Mammary epithelial cell (primary cell): ENCODE measurements at regions of chr10 and their contacts with region 1.

Region 1: GRCh38 chr10:69800109-69800508 is 1.6 kb upstream of the COL13A1 start:
- DNase-seq: peak; percentile 48
- H3K4me3 ChIP-seq: no peak overlapping the region
- H3K27ac ChIP-seq: no peak overlapping the region
- H3K4me1 ChIP-seq: peaks cover 35% of the 10 kb centered on the region
- H3K27me3 ChIP-seq: no peaks in the 10 kb centered on the region
- CTCF ChIP-seq: peak; percentile 80 to 86

Region 2: GRCh38 chr10:69515699-69516259 is 284.3 kb before region 1 on chr10:
- CTCF ChIA-PET with region 1: no interaction called
- dilution Hi-C with region 1: no loop called
- in situ Hi-C with region 1: no loop called
- intact Hi-C with region 1: loop called (anchors 1 kb)
- DNase-seq: peak; percentile 53
- H3K4me3 ChIP-seq: no peak overlapping the region
- H3K27ac ChIP-seq: no peak overlapping the region
- H3K4me1 ChIP-seq: no peaks in the 10 kb centered on the region
- H3K27me3 ChIP-seq: peaks cover 2% of the 10 kb centered on the region
- CTCF ChIP-seq: peak; percentile 94 to 96

Region 3: DNA sequence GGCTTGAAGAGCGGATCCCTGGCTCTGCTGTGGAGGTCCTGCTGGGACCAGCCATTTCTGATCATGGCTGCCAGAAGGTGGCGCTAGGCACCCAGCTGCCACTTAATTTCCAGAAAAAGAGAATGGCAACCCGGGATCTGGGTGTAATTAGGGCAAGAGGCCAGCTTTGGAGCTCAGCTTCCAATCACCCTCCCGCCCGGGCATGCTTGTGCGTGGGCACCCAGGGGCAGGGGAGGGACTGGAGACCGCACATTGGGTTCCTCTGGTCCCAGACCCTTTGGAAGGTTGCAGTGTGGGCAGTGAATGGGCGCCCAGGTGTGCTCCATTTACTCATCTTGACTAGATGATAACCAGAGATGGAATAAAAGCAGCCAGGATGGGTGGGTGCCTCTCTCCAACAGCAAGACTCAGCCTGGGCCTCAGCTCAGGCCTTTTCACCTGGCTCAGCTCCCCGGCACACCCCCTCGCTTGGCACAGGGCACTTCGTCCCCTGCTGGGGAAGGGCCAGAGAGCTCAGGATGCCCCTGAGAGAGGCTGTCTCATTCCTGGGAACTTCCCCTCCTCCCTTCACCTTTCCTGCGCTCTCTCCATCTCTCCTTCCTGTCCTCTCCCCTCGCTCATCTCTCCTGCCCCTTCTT is 155.3 kb before region 1 on chr10:
- CTCF ChIA-PET with region 1: no interaction called
- dilution Hi-C with region 1: no loop called
- in situ Hi-C with region 1: no loop called
- intact Hi-C with region 1: loop called (anchors 1 kb)
- DNase-seq: peak; percentile 52
- H3K4me3 ChIP-seq: no peak overlapping the region
- H3K27ac ChIP-seq: no peak overlapping the region
- H3K4me1 ChIP-seq: peaks cover 28% of the 10 kb centered on the region
- H3K27me3 ChIP-seq: no peaks in the 10 kb centered on the region
- CTCF ChIP-seq: peak; percentile 78 to 88

Region 4: GRCh38 chr10:69742928-69743602 is 57.0 kb before region 1 on chr10:
- CTCF ChIA-PET with region 1: no interaction called
- dilution Hi-C with region 1: no loop called
- in situ Hi-C with region 1: no loop called
- intact Hi-C with region 1: loop called (anchors 2 kb)
- DNase-seq: no peak
- H3K4me3 ChIP-seq: no peak overlapping the region
- H3K27ac ChIP-seq: no peak overlapping the region
- H3K4me1 ChIP-seq: no peaks in the 10 kb centered on the region
- H3K27me3 ChIP-seq: no peaks in the 10 kb centered on the region
- CTCF ChIP-seq: peak; percentile 33 to 38

Region 5: GRCh38 chr10:69769395-69769992 is 30.6 kb before region 1 on chr10:
- CTCF ChIA-PET with region 1: no interaction called
- dilution Hi-C with region 1: no loop called
- in situ Hi-C with region 1: no loop called
- intact Hi-C with region 1: no loop called
- DNase-seq: peak; percentile 59
- H3K4me3 ChIP-seq: no peak overlapping the region
- H3K27ac ChIP-seq: no peak overlapping the region
- H3K4me1 ChIP-seq: peaks cover 10% of the 10 kb centered on the region
- H3K27me3 ChIP-seq: no peaks in the 10 kb centered on the region
- CTCF ChIP-seq: no peak

Region 6: DNA sequence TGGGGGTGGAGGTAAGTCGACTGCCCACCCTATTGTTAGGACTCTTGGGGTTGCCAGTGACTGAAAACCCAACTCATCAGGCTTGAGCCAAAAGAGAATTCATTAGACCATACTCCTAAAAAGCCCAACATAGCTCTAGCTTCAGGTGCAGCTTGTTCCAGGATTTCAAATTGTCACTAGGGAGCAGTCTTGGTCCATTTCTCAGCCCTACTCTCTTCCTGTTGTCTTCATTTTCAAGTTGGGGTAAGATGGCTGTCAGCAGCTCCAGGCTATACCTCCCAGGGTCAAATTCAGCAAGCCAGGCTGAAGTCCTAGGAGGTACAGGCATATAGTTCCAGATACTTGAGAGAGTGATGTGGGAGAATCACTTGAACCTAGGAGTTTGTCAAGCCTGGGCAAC is 13.3 kb before region 1 on chr10:
- CTCF ChIA-PET with region 1: interaction called, 5 read pairs
- dilution Hi-C with region 1: no loop called
- in situ Hi-C with region 1: no loop called
- intact Hi-C with region 1: loop called (anchors 2 kb)
- DNase-seq: peak; percentile 35
- H3K4me3 ChIP-seq: no peak overlapping the region
- H3K27ac ChIP-seq: no peak overlapping the region
- H3K4me1 ChIP-seq: no peaks in the 10 kb centered on the region
- H3K27me3 ChIP-seq: no peaks in the 10 kb centered on the region
- CTCF ChIP-seq: peak; percentile 35 to 47

Region 7: GRCh38 chr10:69861251-69862240 is 61.4 kb after region 1 on chr10:
- CTCF ChIA-PET with region 1: interaction called, 6 read pairs
- dilution Hi-C with region 1: no loop called
- in situ Hi-C with region 1: no loop called
- intact Hi-C with region 1: loop called (anchors 2 kb)
- DNase-seq: peak; percentile 92
- H3K4me3 ChIP-seq: no peak overlapping the region
- H3K27ac ChIP-seq: peak overlapping the region; percentile 68
- H3K4me1 ChIP-seq: peaks cover 55% of the 10 kb centered on the region
- H3K27me3 ChIP-seq: no peaks in the 10 kb centered on the region
- CTCF ChIP-seq: peak; percentile 55 to 67

Region 8: GRCh38 chr10:70381471-70382421 is 581.6 kb after region 1 on chr10:
- CTCF ChIA-PET with region 1: no interaction called
- dilution Hi-C with region 1: no loop called
- in situ Hi-C with region 1: no loop called
- intact Hi-C with region 1: loop called (anchors 10 kb)
- DNase-seq: peak; percentile 39
- H3K4me3 ChIP-seq: peak overlapping the region; percentile 73 to 76 (median 75)
- H3K27ac ChIP-seq: peak overlapping the region; percentile 8
- H3K4me1 ChIP-seq: peaks cover 24% of the 10 kb centered on the region
- H3K27me3 ChIP-seq: no peaks in the 10 kb centered on the region
- CTCF ChIP-seq: no peak